Calu3 (cell line): ENCODE measurements at regions of chr13 and their contacts with region 1.

Region 1: GRCh38 chr13:97344265-97345175 is 89.4 kb upstream of the RAP2A start:
- DNase-seq: peak; percentile 16
- H3K4me3 Mint-ChIP-seq: no peak overlapping the region
- H3K27ac Mint-ChIP-seq: no peak overlapping the region
- H3K4me1 Mint-ChIP-seq: peaks cover 5% of the 10 kb centered on the region
- H3K27me3 Mint-ChIP-seq: no peaks in the 10 kb centered on the region
- CTCF ChIP-seq: peak; percentile 14

Region 2: DNA sequence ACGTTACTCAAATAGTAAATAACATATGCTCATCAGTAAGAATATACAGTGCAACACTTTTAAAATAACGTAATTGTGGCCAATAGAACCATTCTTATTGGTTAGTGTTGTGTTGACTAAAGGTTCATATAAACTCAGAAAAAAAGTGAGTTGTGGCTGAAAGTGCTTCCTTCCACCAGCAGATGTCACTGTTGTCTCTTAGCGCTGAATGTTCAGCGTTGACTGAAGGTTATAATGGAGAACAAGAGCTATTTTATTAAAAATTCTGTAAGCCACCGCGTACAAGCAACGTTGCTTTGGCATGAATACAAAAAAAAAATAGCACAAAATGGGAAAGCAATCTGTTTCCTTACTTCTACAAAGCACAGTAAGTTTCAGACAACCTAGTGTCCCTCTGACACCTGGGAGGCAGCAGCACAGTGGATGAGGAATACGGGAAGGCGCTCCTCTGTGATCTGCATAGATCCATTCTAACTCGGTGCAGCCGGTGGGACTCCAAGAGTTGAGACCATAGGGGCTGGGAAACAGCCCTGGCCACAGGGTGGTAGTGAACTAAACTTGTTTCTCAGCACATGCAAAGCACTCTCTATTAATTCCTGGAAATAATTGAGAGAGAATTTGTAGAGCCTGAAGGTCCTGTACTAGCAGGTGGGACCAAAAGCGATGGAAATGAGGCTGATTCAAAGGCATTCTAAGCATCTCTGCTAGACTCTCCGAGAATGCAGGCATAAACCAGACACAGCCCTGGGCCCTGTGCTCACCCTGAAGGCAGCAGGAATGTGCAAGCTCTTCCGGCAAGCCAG is 326.3 kb before region 1 on chr13:
- CTCF ChIA-PET with region 1: no interaction called
- intact Hi-C with region 1: loop called (anchors 5 kb)
- DNase-seq: no peak
- H3K4me3 Mint-ChIP-seq: no peak overlapping the region
- H3K27ac Mint-ChIP-seq: no peak overlapping the region
- H3K4me1 Mint-ChIP-seq: no peaks in the 10 kb centered on the region
- H3K27me3 Mint-ChIP-seq: peaks cover 14% of the 10 kb centered on the region
- CTCF ChIP-seq: peak; percentile 16

Region 3: DNA sequence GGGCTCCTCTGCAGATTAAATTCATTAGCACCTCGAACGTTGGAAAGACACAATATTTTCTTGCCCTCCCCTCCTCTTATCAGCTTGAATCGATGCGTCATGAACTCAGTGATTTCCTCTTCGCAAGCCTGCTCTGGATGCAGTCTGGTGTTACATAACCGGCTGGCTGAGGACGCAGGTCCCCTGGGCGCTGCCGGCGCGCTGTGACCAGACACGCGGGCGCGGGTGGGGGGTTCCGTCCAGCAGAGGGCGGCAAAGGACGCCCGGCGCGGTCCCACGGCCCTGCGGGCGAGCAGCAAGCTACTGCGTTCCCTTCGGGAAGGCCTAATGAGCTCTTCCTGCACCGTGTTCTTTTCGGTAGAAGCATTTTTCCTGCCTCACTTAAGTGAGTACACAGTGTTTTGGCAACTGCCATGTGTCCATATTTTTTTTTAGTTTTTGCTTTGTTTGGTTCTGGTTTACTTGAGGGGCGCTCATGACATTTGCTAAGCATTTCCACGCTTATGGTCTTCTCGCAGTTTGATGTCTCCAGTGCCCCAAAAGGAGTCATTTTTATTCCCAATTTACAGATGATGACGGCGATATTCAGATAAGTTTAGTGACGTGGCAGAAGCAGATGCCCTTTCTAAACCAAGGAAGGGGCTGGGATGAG is 234.6 kb before region 1 on chr13:
- CTCF ChIA-PET with region 1: interaction called, 8 read pairs
- intact Hi-C with region 1: loop called (anchors 5 kb)
- DNase-seq: peak; percentile 85
- H3K4me3 Mint-ChIP-seq: peak overlapping the region; percentile 61
- H3K27ac Mint-ChIP-seq: peak overlapping the region; percentile 82
- H3K4me1 Mint-ChIP-seq: peaks cover 46% of the 10 kb centered on the region
- H3K27me3 Mint-ChIP-seq: no peaks in the 10 kb centered on the region
- CTCF ChIP-seq: peak; percentile 55

Region 4: DNA sequence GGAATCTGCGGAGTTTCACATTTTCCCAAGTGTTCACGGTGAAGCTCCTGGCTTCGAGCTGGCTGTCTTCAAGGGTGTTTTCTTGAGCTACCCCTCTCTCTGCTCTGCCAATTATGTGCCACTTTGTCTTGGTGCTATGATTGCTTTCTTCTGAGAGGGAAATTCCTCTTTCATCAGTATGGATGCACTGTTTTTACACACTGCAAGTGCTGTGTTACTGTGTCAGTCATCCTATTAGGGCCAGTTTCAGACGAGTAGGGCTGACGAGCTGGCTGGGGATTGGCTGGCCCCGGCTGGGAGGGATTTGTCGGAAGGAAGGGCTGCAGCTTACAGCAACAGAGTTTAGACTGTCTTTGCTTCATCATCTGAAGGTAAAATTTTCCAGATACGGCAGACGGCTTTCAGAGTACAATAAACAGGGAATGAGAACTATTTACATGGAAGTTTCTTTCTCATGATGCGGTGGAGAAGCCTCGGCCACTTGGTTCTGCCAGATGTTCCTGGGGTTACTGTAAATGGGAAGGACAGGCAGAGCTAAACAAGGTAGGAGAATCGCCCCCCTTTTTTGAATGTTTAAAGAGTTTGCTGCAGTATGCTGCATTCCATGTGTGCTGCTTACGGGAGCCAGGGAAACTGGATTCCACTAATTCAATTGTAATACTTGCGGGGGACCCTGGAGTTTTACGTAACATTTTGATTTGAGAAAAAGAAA is 122.4 kb before region 1 on chr13 and contains the start of gene MBNL2:
- CTCF ChIA-PET with region 1: interaction called, 3 read pairs
- intact Hi-C with region 1: loop called (anchors 5 kb)
- DNase-seq: peak; percentile 75
- H3K4me3 Mint-ChIP-seq: peak within 1 kb of the TSS; percentile 78
- H3K27ac Mint-ChIP-seq: peak within 1 kb of the TSS; percentile 95
- H3K4me1 Mint-ChIP-seq: peaks cover 26% of the 10 kb centered on the region
- H3K27me3 Mint-ChIP-seq: no peaks in the 10 kb centered on the region
- CTCF ChIP-seq: no peak
- total RNA-seq, gene MBNL2: 29.8 and 37.1 TPM in 2 replicates

Region 5: GRCh38 chr13:97257800-97258799 is 86.4 kb before region 1 on chr13:
- CTCF ChIA-PET with region 1: no interaction called
- intact Hi-C with region 1: loop called (anchors 2 kb)
- DNase-seq: peak; percentile 54
- H3K4me3 Mint-ChIP-seq: peak overlapping the region; percentile 24
- H3K27ac Mint-ChIP-seq: peak overlapping the region; percentile 96
- H3K4me1 Mint-ChIP-seq: peaks cover 38% of the 10 kb centered on the region
- H3K27me3 Mint-ChIP-seq: no peaks in the 10 kb centered on the region
- CTCF ChIP-seq: no peak

Region 6: GRCh38 chr13:97279913-97280312 is 64.6 kb before region 1 on chr13:
- CTCF ChIA-PET with region 1: no interaction called
- intact Hi-C with region 1: loop called (anchors 2 kb)
- DNase-seq: no peak
- H3K4me3 Mint-ChIP-seq: no peak overlapping the region
- H3K27ac Mint-ChIP-seq: no peak overlapping the region
- H3K4me1 Mint-ChIP-seq: peaks cover 34% of the 10 kb centered on the region
- H3K27me3 Mint-ChIP-seq: no peaks in the 10 kb centered on the region
- CTCF ChIP-seq: no peak

Region 7: GRCh38 chr13:97506511-97506910 is 162.0 kb after region 1 on chr13:
- CTCF ChIA-PET with region 1: no interaction called
- intact Hi-C with region 1: no loop called
- DNase-seq: no peak
- H3K4me3 Mint-ChIP-seq: no peak overlapping the region
- H3K27ac Mint-ChIP-seq: no peak overlapping the region
- H3K4me1 Mint-ChIP-seq: no peaks in the 10 kb centered on the region
- H3K27me3 Mint-ChIP-seq: peaks cover 11% of the 10 kb centered on the region
- CTCF ChIP-seq: no peak

Region 8: GRCh38 chr13:97559030-97559429 is 214.5 kb after region 1 on chr13:
- CTCF ChIA-PET with region 1: no interaction called
- intact Hi-C with region 1: no loop called
- DNase-seq: no peak
- H3K4me3 Mint-ChIP-seq: no peak overlapping the region
- H3K27ac Mint-ChIP-seq: no peak overlapping the region
- H3K4me1 Mint-ChIP-seq: no peaks in the 10 kb centered on the region
- H3K27me3 Mint-ChIP-seq: peaks cover 12% of the 10 kb centered on the region
- CTCF ChIP-seq: no peak

Region 9: GRCh38 chr13:97639236-97639635 is 294.7 kb after region 1 on chr13:
- CTCF ChIA-PET with region 1: no interaction called
- intact Hi-C with region 1: no loop called
- DNase-seq: no peak
- H3K4me3 Mint-ChIP-seq: no peak overlapping the region
- H3K27ac Mint-ChIP-seq: no peak overlapping the region
- H3K4me1 Mint-ChIP-seq: no peaks in the 10 kb centered on the region
- H3K27me3 Mint-ChIP-seq: no peaks in the 10 kb centered on the region
- CTCF ChIP-seq: no peak

Region 10: DNA sequence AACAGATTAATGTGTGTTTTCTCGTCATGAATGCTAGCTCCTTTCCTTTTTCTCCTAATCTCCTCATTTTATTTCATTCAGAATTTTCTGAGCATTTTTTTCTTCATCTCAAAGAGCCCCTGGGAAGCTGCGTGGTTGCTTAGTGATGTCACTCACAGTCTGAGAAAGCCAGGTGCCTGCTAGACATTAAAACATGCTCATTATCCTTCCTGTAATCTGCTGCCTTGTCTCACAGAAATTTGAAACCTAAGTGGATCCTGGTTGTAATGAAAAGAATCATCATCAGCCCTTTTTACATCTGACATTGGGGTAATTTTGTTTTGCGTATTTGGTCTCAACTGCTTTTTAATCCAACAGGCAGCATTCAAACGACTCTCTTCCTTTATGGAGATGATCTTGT is 940.8 kb after region 1 on chr13:
- CTCF ChIA-PET with region 1: no interaction called
- intact Hi-C with region 1: no loop called
- DNase-seq: no peak
- H3K4me3 Mint-ChIP-seq: no peak overlapping the region
- H3K27ac Mint-ChIP-seq: no peak overlapping the region
- H3K4me1 Mint-ChIP-seq: peaks cover 1% of the 10 kb centered on the region
- H3K27me3 Mint-ChIP-seq: no peaks in the 10 kb centered on the region
- CTCF ChIP-seq: no peak